ENCODE measurements at regions of chr16 and their contacts with region 1.

Region 1: GRCh38 chr16:85554112-85554813 is 58.9 kb upstream of the GSE1 start:
- DNase-seq: peak; percentile 45
- ATAC-seq: peak; percentile 62
- H3K4me3 Mint-ChIP-seq: peak overlapping the region; percentile 96
- H3K27ac Mint-ChIP-seq: peak overlapping the region; percentile 97
- H3K4me1 Mint-ChIP-seq: peaks cover 39% of the 10 kb centered on the region
- H3K27me3 Mint-ChIP-seq: no peaks in the 10 kb centered on the region
- CTCF ChIP-seq: no peak

Region 2: GRCh38 chr16:85027349-85027957 is 526.8 kb before region 1 on chr16 and contains the start of gene KIAA0513:
- CTCF ChIA-PET with region 1: no interaction called
- POLR2A ChIA-PET with region 1: no interaction called
- intact Hi-C with region 1: loop called (anchors 5 kb)
- DNase-seq: peak; percentile 99
- ATAC-seq: peak; percentile 87
- H3K4me3 Mint-ChIP-seq: peak within 1 kb of the TSS; percentile 89
- H3K27ac Mint-ChIP-seq: peak within 1 kb of the TSS; percentile 88
- H3K4me1 Mint-ChIP-seq: peaks cover 42% of the 10 kb centered on the region
- H3K27me3 Mint-ChIP-seq: peaks cover 11% of the 10 kb centered on the region
- CTCF ChIP-seq: no peak
- total RNA-seq, gene KIAA0513: 0.62 and 1.1 TPM in 2 replicates

Region 3: GRCh38 chr16:85479972-85480751 is 74.1 kb before region 1 on chr16:
- CTCF ChIA-PET with region 1: interaction called, 7 read pairs
- POLR2A ChIA-PET with region 1: no interaction called
- intact Hi-C with region 1: loop called (anchors 2 kb)
- DNase-seq: peak; percentile 49
- ATAC-seq: peak; percentile 68
- H3K4me3 Mint-ChIP-seq: no peak overlapping the region
- H3K27ac Mint-ChIP-seq: no peak overlapping the region
- H3K4me1 Mint-ChIP-seq: peaks cover 15% of the 10 kb centered on the region
- H3K27me3 Mint-ChIP-seq: peaks cover 15% of the 10 kb centered on the region
- CTCF ChIP-seq: no peak

Region 4: GRCh38 chr16:85610508-85611332 is 56.5 kb after region 1 on chr16:
- CTCF ChIA-PET with region 1: interaction called, 22 read pairs
- POLR2A ChIA-PET with region 1: interaction called, 88 read pairs
- intact Hi-C with region 1: loop called (anchors 1 kb)
- DNase-seq: peak; percentile 89
- ATAC-seq: peak; percentile 62
- H3K4me3 Mint-ChIP-seq: peak overlapping the region; percentile 81
- H3K27ac Mint-ChIP-seq: peak overlapping the region; percentile 70
- H3K4me1 Mint-ChIP-seq: peaks cover 63% of the 10 kb centered on the region
- H3K27me3 Mint-ChIP-seq: no peaks in the 10 kb centered on the region
- CTCF ChIP-seq: peak; percentile 77

Region 5: DNA sequence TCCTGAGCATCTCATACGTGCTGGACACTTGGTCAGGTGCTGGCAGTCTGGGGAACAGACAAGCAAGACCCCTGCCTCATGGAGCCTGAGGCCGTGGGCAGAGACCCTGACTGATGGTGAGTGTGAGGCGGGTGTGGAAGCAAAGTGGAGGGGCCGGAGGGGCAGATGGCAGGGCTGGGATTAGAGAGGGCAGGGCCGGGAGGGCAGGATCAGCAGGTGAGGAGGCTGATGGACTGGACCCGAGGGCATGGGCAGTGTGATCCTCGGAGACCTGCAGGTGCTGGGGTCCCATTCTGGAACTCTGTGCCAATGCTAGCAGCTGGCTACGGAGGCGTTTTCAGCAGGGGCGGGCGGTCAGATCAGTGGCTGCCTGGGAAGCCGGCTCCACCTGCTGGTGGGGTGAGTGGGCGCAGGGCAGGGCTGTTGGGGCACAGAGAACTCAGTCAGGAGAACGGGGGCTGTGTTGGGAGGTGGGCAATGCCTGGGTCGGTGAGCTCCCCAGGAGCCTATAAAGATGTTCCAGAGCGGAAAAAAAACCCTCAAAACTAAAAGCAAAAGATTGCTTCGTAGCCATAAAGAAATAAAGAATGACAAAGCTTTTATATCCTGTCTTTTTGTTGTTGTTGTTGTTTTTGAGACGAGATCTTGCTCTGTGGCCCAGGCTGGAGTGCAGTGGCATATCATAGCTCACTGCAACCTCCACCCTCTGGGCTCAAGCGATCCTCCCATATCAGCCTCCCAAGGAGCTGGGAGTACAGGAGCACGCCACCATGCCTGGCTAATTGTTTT is 205.6 kb after region 1 on chr16:
- CTCF ChIA-PET with region 1: no interaction called
- POLR2A ChIA-PET with region 1: interaction called, 11 read pairs
- intact Hi-C with region 1: loop called (anchors 2 kb)
- DNase-seq: peak; percentile 53
- ATAC-seq: no peak
- H3K4me3 Mint-ChIP-seq: peak overlapping the region; percentile 44
- H3K27ac Mint-ChIP-seq: peak overlapping the region; percentile 100
- H3K4me1 Mint-ChIP-seq: peaks cover 77% of the 10 kb centered on the region
- H3K27me3 Mint-ChIP-seq: no peaks in the 10 kb centered on the region
- CTCF ChIP-seq: no peak

Region 6: DNA sequence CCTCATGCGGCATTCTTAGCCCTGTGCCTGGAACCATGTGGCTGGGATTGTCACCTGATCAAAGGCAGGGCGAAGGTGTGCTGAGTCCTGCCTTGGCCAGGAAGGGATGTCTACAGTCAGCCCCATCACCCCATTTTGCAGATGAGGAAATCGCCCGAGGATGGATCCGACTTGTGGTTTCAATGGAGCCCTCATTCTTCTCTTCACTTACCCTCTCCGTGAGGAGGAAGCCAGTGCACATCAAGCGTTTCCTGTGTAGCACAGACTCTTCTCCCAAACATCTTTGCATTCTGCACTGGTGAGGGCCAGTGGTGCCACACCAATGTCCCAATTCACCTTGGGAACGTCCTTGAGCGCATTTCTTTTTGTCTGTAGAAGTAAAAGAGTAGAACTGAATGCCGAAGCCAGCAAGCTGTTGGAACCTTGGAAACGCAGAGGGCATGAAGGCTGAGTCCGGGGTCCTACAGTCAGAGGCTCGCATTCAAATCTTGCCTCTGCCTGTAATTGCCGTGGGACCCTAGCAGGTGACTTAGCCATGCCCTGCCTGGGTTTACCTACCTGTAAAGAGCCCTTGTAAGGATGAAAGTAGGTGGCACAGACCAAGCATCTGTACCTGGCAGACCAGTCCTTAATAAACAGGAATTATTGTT is 430.1 kb after region 1 on chr16:
- CTCF ChIA-PET with region 1: no interaction called
- POLR2A ChIA-PET with region 1: no interaction called
- intact Hi-C with region 1: no loop called
- DNase-seq: peak; percentile 13
- ATAC-seq: no peak
- H3K4me3 Mint-ChIP-seq: peak overlapping the region; percentile 67
- H3K27ac Mint-ChIP-seq: peak overlapping the region; percentile 82
- H3K4me1 Mint-ChIP-seq: peaks cover 84% of the 10 kb centered on the region
- H3K27me3 Mint-ChIP-seq: no peaks in the 10 kb centered on the region
- CTCF ChIP-seq: no peak

Region 7: DNA sequence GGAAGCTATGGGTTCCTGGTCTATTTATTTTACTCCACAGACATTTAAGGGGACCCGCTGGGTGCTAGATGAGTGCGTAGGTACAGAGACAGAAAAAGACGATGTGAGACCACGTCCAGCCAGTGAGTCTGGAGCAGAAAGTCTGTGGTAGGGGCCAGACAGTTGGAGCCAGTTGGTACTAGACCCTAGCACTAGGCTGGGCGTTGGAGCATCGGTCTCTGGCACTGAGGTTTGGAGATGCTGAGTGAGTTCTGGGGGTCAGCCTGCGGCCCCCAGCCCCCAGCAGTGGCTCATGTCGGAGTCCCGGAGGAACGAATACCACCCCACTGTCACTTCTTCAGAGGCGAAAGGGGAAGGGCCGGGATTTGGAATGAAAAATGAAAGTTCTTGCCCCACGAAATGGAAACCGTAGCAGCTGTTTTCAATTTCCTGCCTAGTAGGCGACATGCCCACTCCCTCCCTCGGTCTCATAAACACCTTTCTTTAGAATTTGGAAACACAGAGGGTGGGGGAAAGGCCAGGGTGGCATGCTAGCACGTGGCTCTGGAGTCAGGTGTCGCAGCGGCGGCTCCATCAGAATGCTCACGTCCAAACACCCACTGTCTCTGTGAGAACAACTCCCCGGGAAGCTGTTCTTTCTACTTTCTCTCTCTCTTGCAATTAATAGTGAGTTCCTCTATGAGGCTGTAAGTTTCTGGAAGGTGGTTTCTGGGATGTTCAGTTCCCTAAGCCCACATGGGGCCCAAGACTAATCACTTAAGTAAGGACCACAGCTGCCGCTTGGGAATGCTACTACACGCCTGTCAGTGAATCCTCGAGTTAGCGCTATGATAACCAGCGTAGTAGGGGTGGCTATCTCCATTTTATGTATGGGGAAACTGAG is 441.5 kb after region 1 on chr16:
- CTCF ChIA-PET with region 1: no interaction called
- POLR2A ChIA-PET with region 1: no interaction called
- intact Hi-C with region 1: loop called (anchors 10 kb)
- DNase-seq: peak; percentile 27
- ATAC-seq: peak; percentile 29
- H3K4me3 Mint-ChIP-seq: peak overlapping the region; percentile 78
- H3K27ac Mint-ChIP-seq: peak overlapping the region; percentile 84
- H3K4me1 Mint-ChIP-seq: peaks cover 89% of the 10 kb centered on the region
- H3K27me3 Mint-ChIP-seq: no peaks in the 10 kb centered on the region
- CTCF ChIP-seq: no peak

Measured in activated B cell treated with CpG ODN at 0.5 μM for 24 hours (primary cell).